ENCODE measurements at regions of chr17 and their contacts with region 1.

Region 1: DNA sequence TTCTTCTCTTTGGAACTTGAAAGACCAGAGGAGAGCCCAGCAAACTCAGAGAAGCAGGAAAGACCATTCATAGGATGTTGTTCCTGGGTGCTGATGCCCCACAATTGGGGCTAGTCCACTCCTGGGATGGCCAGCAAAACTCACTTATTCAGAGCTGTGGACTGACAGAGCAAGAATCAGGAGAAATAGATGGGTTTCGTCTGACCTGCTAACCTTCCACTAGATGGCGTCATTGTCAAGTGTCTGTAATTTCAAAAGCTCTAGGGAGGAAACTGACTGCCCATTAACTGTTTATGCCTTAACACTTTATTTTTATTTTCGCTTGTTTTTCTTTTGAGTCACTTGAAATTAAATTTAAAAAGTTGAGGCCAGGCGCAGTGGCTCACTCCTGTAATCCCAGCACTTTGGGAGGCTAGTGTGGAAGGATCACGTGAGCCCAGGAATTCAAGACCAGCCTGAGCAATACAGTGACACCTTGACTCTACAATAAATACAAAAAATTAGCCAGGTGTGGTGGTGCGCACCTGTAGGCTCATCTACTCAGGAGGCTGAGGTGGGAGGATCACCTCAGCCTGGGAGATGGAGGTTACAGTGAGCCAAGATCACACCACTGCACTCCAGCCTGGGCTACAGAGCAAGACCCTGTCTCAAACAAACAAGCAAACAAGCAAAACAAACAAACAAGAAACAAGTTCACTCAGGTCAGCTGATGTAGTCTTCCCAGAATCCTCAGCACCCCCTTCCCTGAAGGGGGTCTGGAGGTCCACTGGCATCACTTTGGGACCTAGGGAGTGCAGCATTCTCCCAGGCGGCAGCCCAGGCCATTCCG is 28.6 kb upstream of the MILR1 start:
- DNase-seq: no peak
- H3K4me3 ChIP-seq: no peak overlapping the region
- H3K27ac ChIP-seq: no peak overlapping the region
- H3K4me1 ChIP-seq: peaks cover 0 to 3% (median 0%) of the 10 kb centered on the region in 4 experiments; a peak in 1 of 7 replicates
- H3K27me3 ChIP-seq: no peaks in the 10 kb centered on the region
- CTCF ChIP-seq: peak in 2 of 3 experiments; percentile 61 to 78; a peak in 3 of 4 replicates
- EP300 ChIP-seq: no peak
- POLR2A ChIP-seq: no peak
- RAD21 ChIP-seq: peak; percentile 82

Region 2: GRCh38 chr17:64320613-64321553 is 99.5 kb before region 1 on chr17:
- CTCF ChIA-PET with region 1: interaction called, 348 read pairs
- POLR2A ChIA-PET with region 1: interaction called, 3 read pairs
- DNase-seq: peak; percentile 58 to 74
- H3K4me3 ChIP-seq: no peak overlapping the region
- H3K27ac ChIP-seq: no peak overlapping the region
- H3K4me1 ChIP-seq: no peaks in the 10 kb centered on the region
- H3K27me3 ChIP-seq: no peaks in the 10 kb centered on the region
- CTCF ChIP-seq: peak; percentile 11 to 86 (median 86)
- EP300 ChIP-seq: no peak
- POLR2A ChIP-seq: no peak
- RAD21 ChIP-seq: peak; percentile 73 to 83

Region 3: GRCh38 chr17:64357191-64357981 is 63.0 kb before region 1 on chr17:
- CTCF ChIA-PET with region 1: interaction called, 18 read pairs
- POLR2A ChIA-PET with region 1: no interaction called
- DNase-seq: no peak
- H3K4me3 ChIP-seq: no peak overlapping the region
- H3K27ac ChIP-seq: no peak overlapping the region
- H3K4me1 ChIP-seq: no peaks in the 10 kb centered on the region
- H3K27me3 ChIP-seq: no peaks in the 10 kb centered on the region
- CTCF ChIP-seq: peak; percentile 8 to 32 (median 24); a peak in 2 of 4 replicates
- EP300 ChIP-seq: no peak
- POLR2A ChIP-seq: no peak
- RAD21 ChIP-seq: 0 out of 4 replicates have a peak, but pooled peaks of 1 of the 2 experiments have one; percentile 2

Region 4: GRCh38 chr17:64459284-64459747 is 39.0 kb after region 1 on chr17:
- CTCF ChIA-PET with region 1: interaction called, 22 read pairs
- POLR2A ChIA-PET with region 1: no interaction called
- DNase-seq: no peak
- H3K4me3 ChIP-seq: no peak overlapping the region
- H3K27ac ChIP-seq: no peak overlapping the region
- H3K4me1 ChIP-seq: no peaks in the 10 kb centered on the region
- H3K27me3 ChIP-seq: no peaks in the 10 kb centered on the region; a peak in 1 of 7 replicates
- CTCF ChIP-seq: no peak
- EP300 ChIP-seq: no peak
- POLR2A ChIP-seq: no peak
- RAD21 ChIP-seq: no peak

Region 5: GRCh38 chr17:64491034-64491859 is 70.9 kb after region 1 on chr17:
- CTCF ChIA-PET with region 1: interaction called, 112 read pairs
- POLR2A ChIA-PET with region 1: interaction called, 39 read pairs
- DNase-seq: no peak
- H3K4me3 ChIP-seq: no peak overlapping the region
- H3K27ac ChIP-seq: no peak overlapping the region
- H3K4me1 ChIP-seq: peaks cover 0 to 3% (median 0%) of the 10 kb centered on the region in 4 experiments; a peak in 1 of 7 replicates
- H3K27me3 ChIP-seq: no peaks in the 10 kb centered on the region
- CTCF ChIP-seq: peak; percentile 54 to 64 (median 60)
- EP300 ChIP-seq: no peak
- POLR2A ChIP-seq: no peak
- RAD21 ChIP-seq: peak; percentile 63 to 68

Region 6: DNA sequence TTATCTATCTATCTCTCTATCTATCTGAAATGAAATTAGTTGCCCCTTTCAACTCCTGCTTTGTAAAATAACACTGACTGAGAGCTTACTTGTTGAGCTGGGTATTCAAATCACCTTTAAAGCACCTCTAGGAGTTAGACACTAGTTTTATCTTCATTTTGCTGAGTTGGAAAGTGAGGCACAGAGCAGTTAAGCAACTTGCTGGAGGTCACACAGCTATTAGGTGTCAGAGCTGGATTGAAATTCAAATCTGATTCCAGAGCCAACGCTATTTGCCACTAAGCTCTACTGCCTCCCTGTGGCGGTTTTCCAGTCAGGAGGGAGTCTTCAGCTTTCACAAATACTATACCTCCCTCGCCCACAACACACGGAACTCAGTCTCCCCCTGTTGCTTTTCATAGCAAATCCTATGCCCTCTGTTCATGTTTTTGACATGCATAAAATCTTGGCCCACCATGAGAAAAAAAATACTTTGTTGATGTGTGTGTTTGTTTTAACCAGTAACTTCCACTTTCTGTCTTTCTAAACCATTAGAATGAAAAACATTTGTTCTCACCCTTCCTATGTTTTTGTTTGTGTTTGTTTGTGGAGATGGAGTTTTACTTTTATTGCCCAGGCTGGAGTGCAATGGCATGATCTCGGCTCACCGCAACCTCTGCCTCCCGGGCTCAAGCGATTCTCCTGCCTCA is 316.6 kb after region 1 on chr17:
- CTCF ChIA-PET with region 1: interaction called, 12 read pairs
- POLR2A ChIA-PET with region 1: no interaction called
- DNase-seq: peak in 1 of 2 experiments; percentile 55
- H3K4me3 ChIP-seq: no peak overlapping the region
- H3K27ac ChIP-seq: no peak overlapping the region
- H3K4me1 ChIP-seq: peaks cover 0 to under 1% (median 0%) of the 10 kb centered on the region in 4 experiments; a peak in 1 of 7 replicates
- H3K27me3 ChIP-seq: no peaks in the 10 kb centered on the region
- CTCF ChIP-seq: peak in 2 of 3 experiments; percentile 57 to 65; a peak in 3 of 4 replicates
- EP300 ChIP-seq: no peak
- POLR2A ChIP-seq: no peak
- RAD21 ChIP-seq: peak; percentile 63 to 73